Cardiac septum (tissue), 1 donor: ENCODE measurements at regions of chr1 and their contacts with region 1.

Region 1: GRCh38 chr1:116853670-116854402 is 55.9 kb upstream of the PTGFRN start:
- DNase-seq: no peak

Region 2: DNA sequence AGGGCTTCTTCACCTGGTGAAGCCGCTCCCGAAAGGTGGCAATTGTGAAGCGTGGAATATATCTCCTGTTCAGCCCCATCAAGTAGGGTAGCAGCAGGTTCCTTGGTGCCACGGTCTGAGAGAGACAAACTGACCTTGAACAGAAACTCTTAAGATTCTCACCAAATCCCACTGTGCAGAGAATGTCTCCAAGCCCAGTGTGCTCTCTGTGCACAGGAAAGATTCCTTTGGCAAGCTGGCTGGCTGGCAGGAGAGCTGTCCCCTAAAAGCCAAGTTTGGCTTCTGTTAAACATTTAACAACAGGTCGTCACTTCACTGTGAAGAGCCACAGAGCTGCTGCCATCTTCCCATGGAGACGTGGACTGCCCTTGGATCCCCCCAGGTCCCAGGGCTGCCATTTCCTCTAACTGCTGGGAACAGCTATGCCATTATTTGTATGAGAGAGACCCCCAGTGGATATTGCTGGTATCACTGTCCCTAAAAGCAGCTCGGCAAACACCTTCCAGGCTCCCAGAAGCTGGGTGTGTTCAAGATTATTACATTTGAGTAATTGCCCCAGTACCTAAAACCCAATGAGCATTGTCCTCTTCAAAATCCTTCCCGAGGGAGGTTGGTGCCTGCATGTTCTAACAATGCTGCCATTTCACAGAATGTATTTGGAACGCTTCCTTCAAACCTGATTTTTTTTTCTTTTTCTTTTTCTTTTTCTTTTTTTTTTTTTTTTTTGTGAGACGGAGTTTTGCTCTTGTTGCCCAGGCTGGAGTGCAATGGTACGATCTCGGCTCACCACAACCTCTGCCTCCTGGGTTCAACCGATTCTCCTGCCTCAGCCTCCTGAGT is 354.8 kb before region 1 on chr1:
- intact Hi-C with region 1: no loop called
- DNase-seq: no peak

Region 3: DNA sequence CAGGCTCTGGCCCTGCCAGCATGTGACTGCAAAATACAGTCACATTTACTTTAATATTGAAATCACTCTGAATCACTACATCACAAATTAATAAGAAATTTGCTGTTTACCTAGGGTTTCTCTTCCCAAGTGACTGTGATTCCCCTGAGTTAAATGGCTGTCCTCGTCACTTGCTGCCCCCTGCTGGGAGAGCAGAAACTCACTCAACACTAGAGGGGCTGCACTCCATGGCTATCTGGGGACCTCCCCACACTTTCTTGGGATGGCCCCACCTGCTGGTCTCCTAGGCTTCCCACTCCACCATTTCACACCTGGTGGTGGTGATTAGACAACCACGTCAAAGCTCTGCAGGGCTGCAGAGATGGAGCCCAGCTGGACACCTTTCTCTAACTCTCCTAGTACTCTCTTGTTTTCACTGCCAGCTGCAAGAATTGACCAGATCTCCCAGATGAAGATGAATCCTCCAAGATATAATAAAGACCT is 36.2 kb before region 1 on chr1:
- intact Hi-C with region 1: no loop called
- DNase-seq: no peak

Region 4: DNA sequence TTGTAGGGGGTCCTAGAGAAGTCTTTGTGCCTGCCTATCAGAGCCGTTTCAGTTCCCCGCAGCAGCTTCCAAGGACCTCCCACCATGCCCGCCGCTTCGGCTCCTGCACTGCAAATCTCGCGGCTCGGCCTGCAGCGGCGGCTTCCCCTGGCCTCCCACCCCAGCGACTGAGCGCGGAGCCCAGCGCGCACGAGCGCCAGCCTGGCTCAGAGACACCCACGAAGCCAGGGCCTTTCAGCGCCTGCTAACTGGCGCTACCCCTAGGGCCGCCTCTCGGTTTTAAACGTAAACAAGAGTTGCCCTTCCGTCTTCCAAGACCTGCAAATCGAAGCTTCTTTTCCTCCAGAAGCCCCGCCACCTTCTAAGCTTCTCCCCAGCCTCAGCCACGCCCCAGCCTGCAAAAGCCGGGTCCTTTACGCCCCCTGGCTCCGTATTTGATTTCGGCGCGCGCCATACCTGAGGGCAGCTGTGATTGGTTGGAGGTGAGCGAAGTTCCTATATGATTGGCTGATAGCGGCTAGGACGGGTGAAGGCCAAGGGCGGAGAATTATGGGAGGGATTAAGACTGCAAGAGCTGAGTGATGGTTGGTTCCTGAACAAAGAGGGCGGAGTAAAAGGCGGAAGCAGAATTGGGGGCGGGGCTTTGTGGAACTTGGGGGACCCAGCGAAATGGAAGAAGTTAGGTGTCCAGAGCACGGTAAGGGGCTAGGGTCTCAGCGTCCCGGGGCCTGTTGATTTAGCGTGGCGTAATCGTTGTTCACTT is 206.0 kb after region 1 on chr1 and contains the start of gene TTF2:
- intact Hi-C with region 1: loop called (anchors 1 kb)
- DNase-seq: peak; percentile 96
- total RNA-seq, gene TTF2: 9.4 TPM